Posterior cingulate gyrus (tissue), 11 donors: ENCODE measurements at regions of chr12 and their contacts with region 1.

Region 1: DNA sequence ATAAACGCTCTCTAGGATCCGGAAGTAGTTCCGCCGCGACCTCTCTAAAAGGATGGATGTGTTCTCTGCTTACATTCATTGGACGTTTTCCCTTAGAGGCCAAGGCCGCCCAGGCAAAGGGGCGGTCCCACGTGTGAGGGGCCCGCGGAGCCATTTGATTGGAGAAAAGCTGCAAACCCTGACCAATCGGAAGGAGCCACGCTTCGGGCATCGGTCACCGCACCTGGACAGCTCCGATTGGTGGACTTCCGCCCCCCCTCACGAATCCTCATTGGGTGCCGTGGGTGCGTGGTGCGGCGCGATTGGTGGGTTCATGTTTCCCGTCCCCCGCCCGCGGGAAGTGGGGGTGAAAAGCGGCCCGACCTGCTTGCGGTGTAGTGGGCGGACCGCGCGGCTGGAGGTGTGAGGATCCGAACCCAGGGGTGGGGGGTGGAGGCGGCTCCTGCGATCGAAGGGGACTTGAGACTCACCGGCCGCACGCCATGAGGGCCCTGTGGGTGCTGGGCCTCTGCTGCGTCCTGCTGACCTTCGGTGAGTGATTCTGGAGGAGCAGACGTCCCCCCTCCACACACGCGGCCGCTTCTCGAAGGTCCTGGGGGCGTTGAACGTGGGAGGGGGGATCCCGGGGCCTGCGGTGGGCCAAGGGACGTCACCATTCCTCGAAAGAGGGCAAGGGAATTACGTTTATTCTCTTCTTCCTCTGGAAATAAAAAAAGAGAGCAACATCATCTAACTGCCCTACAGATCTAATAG is at the start of gene HSP90B1:
- DNase-seq: peak; percentile 98 to 100 (median 99)

Region 2: DNA sequence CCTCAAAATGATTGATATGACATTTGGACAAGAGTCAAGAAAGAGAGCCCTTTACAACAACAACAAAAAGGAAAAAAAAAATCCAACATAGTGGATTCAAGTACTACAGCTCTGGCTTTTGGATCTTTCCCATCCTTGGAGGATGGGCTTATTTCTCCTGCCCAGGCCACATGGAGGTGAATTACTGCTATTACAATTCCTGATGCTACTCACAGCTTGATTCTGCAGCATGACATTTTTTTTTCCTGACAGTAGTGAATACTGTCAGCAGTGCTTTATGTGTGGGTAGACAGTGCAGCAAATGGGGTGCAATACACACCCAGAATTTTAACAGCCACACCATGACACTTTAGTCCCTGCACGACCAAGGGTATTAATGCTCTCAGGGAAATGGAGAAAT is 42.5 kb before region 1 on chr12:
- intact Hi-C with region 1: no loop called
- DNase-seq: no peak

Region 3: GRCh38 chr12:103956516-103957027 is 26.4 kb after region 1 on chr12:
- intact Hi-C with region 1: loop called (anchors 2 kb)
- DNase-seq: peak in 2 of 10 donors; percentile 75 to 84